PC-3 (cell line): ENCODE measurements at regions of chr11 and their contacts with region 1.

Region 1: DNA sequence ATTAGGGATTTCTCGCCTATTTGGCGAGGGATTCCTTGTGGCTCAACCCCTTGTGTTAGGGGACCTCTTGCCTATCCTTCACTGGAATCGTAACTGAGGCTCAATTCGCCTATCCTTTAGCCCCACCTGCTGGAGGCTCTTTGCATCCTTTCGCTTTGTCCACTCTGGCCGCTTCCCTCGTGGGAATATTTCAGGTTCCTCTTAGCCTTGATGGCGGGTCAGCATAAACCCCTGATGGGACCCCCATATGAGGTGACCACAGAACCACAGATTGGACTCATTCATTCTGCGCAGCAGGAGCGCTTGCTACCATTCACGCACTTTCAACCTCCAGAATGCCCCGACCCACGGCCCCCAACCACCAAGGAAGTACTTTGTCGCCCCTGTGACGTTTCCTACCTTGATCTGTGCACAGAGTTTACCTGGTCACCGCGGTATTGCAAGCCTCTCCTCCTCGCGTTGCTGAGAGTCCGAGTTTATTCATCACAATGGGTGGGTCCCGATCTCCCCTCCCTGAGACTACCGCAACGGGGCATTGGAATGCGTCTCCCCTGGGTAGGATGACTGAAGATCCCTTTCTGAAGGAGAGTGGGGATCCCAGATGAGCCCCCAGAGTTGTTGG is at the start of gene OR52N2:
- DNase-seq: peak; percentile 79
- ATAC-seq: peak; percentile 90
- H3K4me3 ChIP-seq: peak within 1 kb of the TSS; percentile 62
- H3K27ac ChIP-seq: no peak within 1 kb of the TSS
- H3K4me1 ChIP-seq: no peaks in the 10 kb centered on the region
- H3K27me3 ChIP-seq: peaks cover 39% of the 10 kb centered on the region
- CTCF ChIP-seq: peak; percentile 83
- total RNA-seq, gene OR52N2: not detected in 2 replicates

Region 2: GRCh38 chr11:4187055-4187988 is 1621.3 kb before region 1 on chr11:
- CTCF ChIA-PET with region 1: no interaction called
- POLR2A ChIA-PET with region 1: no interaction called
- intact Hi-C with region 1: loop called (anchors 2 kb)
- DNase-seq: peak; percentile 83
- ATAC-seq: peak; percentile 92
- H3K4me3 ChIP-seq: peak overlapping the region; percentile 80
- H3K27ac ChIP-seq: no peak overlapping the region
- H3K4me1 ChIP-seq: no peaks in the 10 kb centered on the region; the same call in 1 of the 2 replicates
- H3K27me3 ChIP-seq: no peaks in the 10 kb centered on the region
- CTCF ChIP-seq: peak; percentile 78

Region 3: GRCh38 chr11:5204787-5205186 is 603.8 kb before region 1 on chr11:
- CTCF ChIA-PET with region 1: no interaction called
- POLR2A ChIA-PET with region 1: no interaction called
- intact Hi-C with region 1: loop called (anchors 10 kb)
- DNase-seq: peak; percentile 59
- ATAC-seq: peak; percentile 82
- H3K4me3 ChIP-seq: no peak overlapping the region
- H3K27ac ChIP-seq: no peak overlapping the region
- H3K4me1 ChIP-seq: no peaks in the 10 kb centered on the region
- H3K27me3 ChIP-seq: no peaks in the 10 kb centered on the region
- CTCF ChIP-seq: peak; percentile 62

Region 4: GRCh38 chr11:5476184-5476819 is 332.3 kb before region 1 on chr11:
- CTCF ChIA-PET with region 1: no interaction called
- POLR2A ChIA-PET with region 1: no interaction called
- intact Hi-C with region 1: loop called (anchors 2 kb)
- DNase-seq: peak; percentile 63
- ATAC-seq: peak; percentile 77
- H3K4me3 ChIP-seq: no peak overlapping the region
- H3K27ac ChIP-seq: no peak overlapping the region
- H3K4me1 ChIP-seq: no peaks in the 10 kb centered on the region
- H3K27me3 ChIP-seq: peaks cover 9% of the 10 kb centered on the region; the same call in 1 of the 2 replicates
- CTCF ChIP-seq: peak; percentile 85

Region 5: DNA sequence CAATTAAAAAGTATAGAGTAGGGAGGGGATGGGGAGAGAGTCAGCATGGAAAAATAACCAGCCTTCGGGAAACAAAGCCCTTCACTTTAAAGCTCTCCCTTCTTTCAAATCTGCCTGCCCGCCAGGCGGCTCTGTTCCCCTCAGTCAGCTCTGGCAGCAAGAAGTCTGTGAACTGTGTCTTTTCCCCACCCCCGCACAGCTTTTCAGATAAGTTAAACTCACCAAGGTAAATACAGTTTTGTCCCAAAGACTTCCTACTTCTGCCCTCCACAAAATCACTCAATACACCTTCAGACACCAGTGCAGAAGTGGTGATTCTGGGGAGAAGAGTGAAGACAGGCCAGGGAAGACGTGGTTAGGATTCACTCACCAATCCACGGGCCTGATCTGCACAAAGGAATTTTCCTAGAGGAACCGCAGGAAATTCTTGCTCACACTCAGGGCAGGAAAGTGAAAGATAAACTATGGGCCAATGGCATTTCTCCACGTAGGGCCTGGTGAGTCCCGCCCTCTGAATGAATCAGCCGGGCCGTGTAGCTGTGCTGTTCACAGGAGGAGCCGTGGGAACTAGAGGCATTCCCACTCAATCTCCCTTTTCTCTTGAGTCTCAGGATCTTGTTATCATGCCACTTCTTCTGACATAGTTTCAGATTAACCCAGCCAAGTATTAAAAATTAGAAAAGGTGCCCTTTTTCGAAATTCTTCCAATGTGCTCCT is 123.8 kb before region 1 on chr11 and contains the start of gene TRIM5:
- CTCF ChIA-PET with region 1: no interaction called
- POLR2A ChIA-PET with region 1: no interaction called
- intact Hi-C with region 1: loop called (anchors 2 kb)
- DNase-seq: peak; percentile 95
- ATAC-seq: peak; percentile 97
- H3K4me3 ChIP-seq: peak within 1 kb of the TSS; percentile 75
- H3K27ac ChIP-seq: peak within 1 kb of the TSS; percentile 93
- H3K4me1 ChIP-seq: peaks cover 9% of the 10 kb centered on the region
- H3K27me3 ChIP-seq: no peaks in the 10 kb centered on the region
- CTCF ChIP-seq: peak; percentile 69
- total RNA-seq, gene TRIM5: 16.1 and 18.6 TPM in 2 replicates

Region 6: GRCh38 chr11:5796541-5796940 is 12.1 kb before region 1 on chr11:
- CTCF ChIA-PET with region 1: no interaction called
- POLR2A ChIA-PET with region 1: no interaction called
- intact Hi-C with region 1: no loop called
- DNase-seq: no peak
- ATAC-seq: no peak
- H3K4me3 ChIP-seq: no peak overlapping the region
- H3K27ac ChIP-seq: no peak overlapping the region
- H3K4me1 ChIP-seq: no peaks in the 10 kb centered on the region
- H3K27me3 ChIP-seq: no peaks in the 10 kb centered on the region
- CTCF ChIP-seq: no peak

Region 7: DNA sequence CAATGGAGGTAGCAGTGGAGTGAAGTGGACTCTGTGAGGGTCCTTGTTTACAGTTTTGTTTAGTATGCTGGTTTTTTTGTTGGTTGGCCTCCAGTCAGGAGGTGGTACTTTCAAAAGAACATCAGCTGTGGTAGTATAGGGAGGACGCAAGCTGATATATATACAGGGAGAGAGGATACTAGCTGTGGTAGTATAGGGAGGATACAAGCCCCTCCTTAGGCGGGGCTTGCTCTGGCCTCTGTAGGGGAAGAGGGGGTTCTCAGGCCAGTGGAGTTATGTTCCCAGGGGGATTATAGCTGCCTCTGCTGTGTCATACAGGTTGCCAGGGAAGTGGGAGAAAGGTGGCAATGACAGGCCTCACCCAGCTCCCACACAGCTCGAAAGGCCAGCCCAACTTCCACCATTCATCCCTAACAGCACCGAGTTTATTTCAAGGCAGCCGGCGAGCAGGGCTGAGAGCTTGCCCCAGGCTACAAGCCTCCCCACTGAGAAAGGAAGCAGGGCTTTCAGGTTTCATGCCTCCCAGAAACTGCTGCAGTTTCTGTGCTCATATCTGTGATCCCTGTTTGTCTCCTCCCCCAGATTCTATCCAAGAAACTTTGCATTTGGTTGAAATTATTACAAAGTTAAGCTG is 22.7 kb after region 1 on chr11:
- CTCF ChIA-PET with region 1: no interaction called
- POLR2A ChIA-PET with region 1: no interaction called
- intact Hi-C with region 1: no loop called
- DNase-seq: no peak
- ATAC-seq: no peak
- H3K4me3 ChIP-seq: no peak overlapping the region
- H3K27ac ChIP-seq: no peak overlapping the region
- H3K4me1 ChIP-seq: no peaks in the 10 kb centered on the region
- H3K27me3 ChIP-seq: no peaks in the 10 kb centered on the region
- CTCF ChIP-seq: no peak

Region 8: GRCh38 chr11:5846701-5847100 is 38.1 kb after region 1 on chr11:
- CTCF ChIA-PET with region 1: no interaction called
- POLR2A ChIA-PET with region 1: no interaction called
- intact Hi-C with region 1: no loop called
- DNase-seq: no peak
- ATAC-seq: no peak
- H3K4me3 ChIP-seq: no peak overlapping the region
- H3K27ac ChIP-seq: no peak overlapping the region
- H3K4me1 ChIP-seq: no peaks in the 10 kb centered on the region
- H3K27me3 ChIP-seq: no peaks in the 10 kb centered on the region
- CTCF ChIP-seq: no peak